CD4-positive, alpha-beta T cell (primary cell): ENCODE measurements at regions of chr1 and their contacts with region 1.

Region 1: GRCh38 chr1:9588551-9589143 is at the start of gene TMEM201:
- DNase-seq: peak; percentile 87 to 98 (median 94)
- ATAC-seq: peak; percentile 91
- H3K4me3 ChIP-seq: peak within 1 kb of the TSS; percentile 66
- H3K4me3 Mint-ChIP-seq: peak within 1 kb of the TSS; percentile 92
- H3K27ac ChIP-seq: no peak within 1 kb of the TSS
- H3K27ac Mint-ChIP-seq: peak within 1 kb of the TSS; percentile 65
- H3K4me1 ChIP-seq: peaks cover 38% of the 10 kb centered on the region
- H3K4me1 Mint-ChIP-seq: peaks cover 33% of the 10 kb centered on the region
- H3K27me3 ChIP-seq: no peaks in the 10 kb centered on the region
- H3K27me3 Mint-ChIP-seq: no peaks in the 10 kb centered on the region
- CTCF ChIP-seq: peak; percentile 6
- total RNA-seq, gene TMEM201: 9.1 to 9.2 TPM

Region 2: GRCh38 chr1:9434247-9435152 is 154.1 kb before region 1 on chr1:
- CTCF ChIA-PET with region 1: no interaction called
- POLR2A ChIA-PET with region 1: no interaction called
- intact Hi-C with region 1: loop called in 1 of 2 experiments (anchors 5 kb)
- DNase-seq: no peak
- ATAC-seq: no peak
- H3K4me3 ChIP-seq: no peak overlapping the region
- H3K4me3 Mint-ChIP-seq: no peak overlapping the region
- H3K27ac ChIP-seq: no peak overlapping the region
- H3K27ac Mint-ChIP-seq: no peak overlapping the region
- H3K4me1 ChIP-seq: peaks cover 2% of the 10 kb centered on the region
- H3K4me1 Mint-ChIP-seq: peaks cover 7% of the 10 kb centered on the region
- H3K27me3 ChIP-seq: no peaks in the 10 kb centered on the region
- H3K27me3 Mint-ChIP-seq: peaks cover under 1% of the 10 kb centered on the region
- CTCF ChIP-seq: no peak

Region 3: GRCh38 chr1:9539165-9539828 is 49.4 kb before region 1 on chr1 and contains the start of gene SLC25A33:
- CTCF ChIA-PET with region 1: interaction called, 4 read pairs
- POLR2A ChIA-PET with region 1: interaction called, 5 read pairs
- intact Hi-C with region 1: loop called in 1 of 2 experiments (anchors 1 kb)
- DNase-seq: peak; percentile 92 to 98 (median 95)
- ATAC-seq: peak; percentile 97
- H3K4me3 ChIP-seq: peak within 1 kb of the TSS; percentile 70
- H3K4me3 Mint-ChIP-seq: peak within 1 kb of the TSS; percentile 91
- H3K27ac ChIP-seq: peak within 1 kb of the TSS in 1 of 2 donors; percentile 69
- H3K27ac Mint-ChIP-seq: peak within 1 kb of the TSS; percentile 90
- H3K4me1 ChIP-seq: peaks cover 33% of the 10 kb centered on the region
- H3K4me1 Mint-ChIP-seq: peaks cover 33% of the 10 kb centered on the region
- H3K27me3 ChIP-seq: no peaks in the 10 kb centered on the region
- H3K27me3 Mint-ChIP-seq: no peaks in the 10 kb centered on the region
- CTCF ChIP-seq: no peak
- total RNA-seq, gene SLC25A33: 5.9 to 6.6 TPM

Region 4: DNA sequence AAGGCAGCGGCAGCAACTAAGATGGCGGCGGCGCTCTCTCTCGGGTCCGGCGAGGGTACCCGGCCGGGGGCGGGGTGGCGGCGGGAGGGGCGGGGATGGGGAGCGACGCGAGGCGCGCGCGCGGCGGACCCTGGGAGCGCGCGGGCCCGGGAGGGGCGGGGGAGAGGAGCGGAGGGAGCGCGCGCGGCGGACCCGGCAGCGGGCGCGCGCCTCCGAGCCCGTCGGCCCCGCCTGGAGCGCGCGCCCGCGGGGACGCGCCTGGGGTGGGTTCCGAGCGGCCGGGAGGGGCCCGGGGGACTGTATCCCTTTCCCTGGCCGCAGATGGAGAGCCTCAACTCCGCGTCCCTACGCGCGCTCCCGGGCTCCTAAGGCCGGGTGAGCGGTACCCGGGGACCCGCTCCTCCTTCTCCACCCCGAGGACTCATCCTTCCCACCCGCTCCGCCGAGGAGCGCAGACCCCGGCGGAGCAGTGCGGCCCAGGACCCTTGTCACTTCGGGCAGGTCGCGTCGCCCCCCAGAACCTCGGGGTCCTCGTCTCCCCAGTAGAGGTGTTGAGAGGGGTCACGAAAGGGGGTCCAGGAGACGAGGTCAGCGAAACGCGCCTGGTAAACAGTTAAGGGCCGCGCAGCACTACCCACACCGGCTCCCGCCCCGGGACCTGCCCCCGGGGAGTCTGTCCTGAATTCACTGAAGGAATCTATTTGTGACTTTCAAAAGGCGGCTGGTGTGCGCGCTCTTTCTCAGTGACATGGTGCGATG is 235.5 kb after region 1 on chr1 and contains the start of gene CLSTN1:
- CTCF ChIA-PET with region 1: no interaction called
- POLR2A ChIA-PET with region 1: no interaction called
- intact Hi-C with region 1: loop called in 1 of 2 experiments (anchors 2 kb)
- DNase-seq: peak; percentile 86 to 94 (median 90)
- ATAC-seq: peak; percentile 74
- H3K4me3 ChIP-seq: peak within 1 kb of the TSS; percentile 87
- H3K4me3 Mint-ChIP-seq: peak within 1 kb of the TSS; percentile 99
- H3K27ac ChIP-seq: peak within 1 kb of the TSS; percentile 57 to 67
- H3K27ac Mint-ChIP-seq: peak within 1 kb of the TSS; percentile 94
- H3K4me1 ChIP-seq: peaks cover 40% of the 10 kb centered on the region
- H3K4me1 Mint-ChIP-seq: peaks cover 43% of the 10 kb centered on the region
- H3K27me3 ChIP-seq: no peaks in the 10 kb centered on the region
- H3K27me3 Mint-ChIP-seq: no peaks in the 10 kb centered on the region
- CTCF ChIP-seq: no peak
- total RNA-seq, gene CLSTN1: 66.8 to 68.1 TPM

Region 5: DNA sequence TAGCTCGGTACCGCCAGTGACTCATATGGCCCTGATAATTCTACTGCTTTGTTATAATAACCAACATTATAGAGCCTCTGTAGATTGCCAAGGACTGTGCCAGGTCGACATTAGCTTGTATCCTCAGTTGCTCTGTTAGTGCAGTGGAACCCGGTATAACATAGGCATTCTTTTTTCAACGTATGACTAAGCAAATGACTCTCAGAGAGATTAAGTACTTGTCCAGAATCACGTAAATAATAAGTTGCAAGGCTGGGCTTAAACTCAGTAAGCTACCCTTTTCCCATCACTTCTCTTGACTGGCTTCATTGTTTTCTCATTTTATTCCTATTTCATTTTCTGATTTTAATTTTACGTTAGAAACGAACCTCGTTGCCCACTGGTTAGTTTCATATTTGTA is 529.2 kb after region 1 on chr1:
- CTCF ChIA-PET with region 1: no interaction called
- POLR2A ChIA-PET with region 1: no interaction called
- intact Hi-C with region 1: no loop called
- DNase-seq: no peak
- ATAC-seq: no peak
- H3K4me3 ChIP-seq: no peak overlapping the region
- H3K4me3 Mint-ChIP-seq: no peak overlapping the region
- H3K27ac ChIP-seq: no peak overlapping the region
- H3K27ac Mint-ChIP-seq: no peak overlapping the region
- H3K4me1 ChIP-seq: no peaks in the 10 kb centered on the region
- H3K4me1 Mint-ChIP-seq: no peaks in the 10 kb centered on the region
- H3K27me3 ChIP-seq: no peaks in the 10 kb centered on the region
- H3K27me3 Mint-ChIP-seq: no peaks in the 10 kb centered on the region
- CTCF ChIP-seq: no peak